ENCODE measurements at regions of chr2 and their contacts with region 1.

Region 1: DNA sequence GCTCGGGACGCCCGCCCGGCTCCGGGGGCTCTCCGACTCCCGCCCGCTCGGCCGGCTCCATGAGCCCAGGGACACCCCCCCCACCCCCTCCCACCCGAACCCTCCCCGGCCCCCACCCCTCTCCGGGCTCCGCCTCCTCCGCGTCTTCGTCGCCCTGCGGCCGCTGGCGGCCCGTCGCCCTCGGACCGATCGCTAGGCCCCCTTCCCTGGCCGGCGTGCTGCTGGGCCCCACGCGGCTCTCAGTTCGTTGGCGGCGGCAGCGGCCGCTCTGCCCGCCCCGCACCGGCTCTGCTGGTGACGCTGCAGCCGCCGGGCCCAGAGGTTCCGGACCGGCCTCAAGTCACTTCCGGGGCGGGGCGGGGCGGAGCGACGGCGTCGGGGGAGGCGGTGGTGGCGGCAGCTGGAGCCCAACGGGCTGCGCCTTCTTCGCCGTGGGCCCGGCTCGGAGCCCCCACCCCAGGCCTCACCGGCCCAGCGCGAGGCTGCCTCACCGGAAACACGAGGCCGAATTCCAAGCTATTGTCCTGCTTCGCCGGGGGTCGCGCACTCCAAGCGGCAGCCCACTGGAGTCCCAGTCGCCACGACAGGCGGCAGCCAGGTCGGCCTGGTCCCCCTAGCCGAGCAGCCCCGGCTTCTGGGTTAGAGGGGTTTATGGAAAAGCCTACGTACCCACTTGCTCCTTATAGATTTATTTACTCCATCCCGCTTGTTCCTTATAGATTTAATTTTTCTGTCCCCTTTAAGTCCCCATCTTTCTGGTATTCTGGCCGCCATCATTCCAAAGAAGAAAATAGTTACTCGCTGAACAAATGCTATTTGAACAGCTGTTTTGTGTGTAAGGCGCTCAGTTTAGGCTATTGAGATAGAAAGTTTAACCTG is at the start of gene PSME4:
- DNase-seq: peak; percentile 93
- ATAC-seq: peak; percentile 89
- H3K4me3 ChIP-seq: peak within 1 kb of the TSS; percentile 71 to 98 (median 95)
- H3K4me3 Mint-ChIP-seq: peak within 1 kb of the TSS; percentile 94
- H3K27ac ChIP-seq: peak within 1 kb of the TSS; percentile 71 to 89
- H3K27ac Mint-ChIP-seq: peak within 1 kb of the TSS; percentile 91
- H3K4me1 ChIP-seq: peaks cover 31 to 33% of the 10 kb centered on the region in 2 donors
- H3K4me1 Mint-ChIP-seq: peaks cover 47% of the 10 kb centered on the region
- H3K27me3 ChIP-seq: no peaks in the 10 kb centered on the region
- H3K27me3 Mint-ChIP-seq: no peaks in the 10 kb centered on the region
- CTCF ChIP-seq: no peak
- total RNA-seq, gene PSME4: 59.9 and 61.9 TPM in 2 replicates

Region 2: GRCh38 chr2:52594026-52594425 is 1376.9 kb before region 1 on chr2:
- CTCF ChIA-PET with region 1: no interaction called
- POLR2A ChIA-PET with region 1: no interaction called
- intact Hi-C with region 1: no loop called
- DNase-seq: no peak
- ATAC-seq: no peak
- H3K4me3 ChIP-seq: no peak overlapping the region
- H3K4me3 Mint-ChIP-seq: no peak overlapping the region
- H3K27ac ChIP-seq: no peak overlapping the region
- H3K27ac Mint-ChIP-seq: no peak overlapping the region
- H3K4me1 ChIP-seq: no peaks in the 10 kb centered on the region
- H3K4me1 Mint-ChIP-seq: no peaks in the 10 kb centered on the region
- H3K27me3 ChIP-seq: no peaks in the 10 kb centered on the region
- H3K27me3 Mint-ChIP-seq: no peaks in the 10 kb centered on the region
- CTCF ChIP-seq: no peak

Region 3: DNA sequence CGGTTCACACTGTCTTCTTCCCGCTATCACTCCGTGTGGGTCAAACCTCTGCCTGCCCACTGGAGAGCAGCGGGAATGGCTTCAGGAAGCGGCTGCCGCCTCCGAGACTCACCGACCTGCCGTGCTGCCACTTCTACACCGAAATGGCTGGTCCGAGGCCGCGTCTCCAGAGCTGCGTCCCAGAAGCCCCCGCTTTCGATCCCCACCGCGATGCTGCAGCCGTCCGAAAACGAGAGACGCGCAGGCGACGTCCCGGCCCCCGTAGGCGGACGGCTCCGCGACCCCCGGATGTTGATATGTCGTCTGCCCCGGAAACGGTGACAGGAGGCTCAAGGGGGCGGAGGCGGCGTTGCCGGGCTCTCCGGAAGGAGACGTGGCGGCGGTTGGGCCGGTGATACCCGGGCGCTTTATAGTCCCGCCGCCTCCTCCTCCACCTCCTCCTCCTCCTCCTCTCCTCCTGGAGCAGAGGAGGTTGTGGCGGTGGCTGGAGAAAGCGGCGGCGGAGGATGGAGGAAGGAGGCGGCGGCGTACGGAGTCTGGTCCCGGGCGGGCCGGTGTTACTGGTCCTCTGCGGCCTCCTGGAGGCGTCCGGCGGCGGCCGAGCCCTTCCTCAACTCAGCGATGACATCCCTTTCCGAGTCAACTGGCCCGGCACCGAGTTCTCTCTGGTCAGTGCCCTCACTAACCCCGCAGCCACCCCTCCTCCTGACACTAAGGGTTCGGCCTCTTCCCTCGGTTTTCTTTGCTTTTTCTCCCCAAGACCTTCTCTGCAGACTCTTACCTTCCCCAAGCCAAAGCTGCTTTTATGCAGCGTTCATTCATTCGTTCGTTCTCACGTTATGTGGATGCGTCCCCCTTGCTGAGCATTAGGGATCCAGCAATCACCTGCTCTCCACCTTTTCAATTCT is 184.0 kb before region 1 on chr2 and contains the starts of genes ASB3 and ERLEC1:
- CTCF ChIA-PET with region 1: no interaction called
- POLR2A ChIA-PET with region 1: interaction called, 3 read pairs
- intact Hi-C with region 1: loop called (anchors 5 kb)
- DNase-seq: peak; percentile 92
- ATAC-seq: peak; percentile 92
- H3K4me3 ChIP-seq: peak within 1 kb of the TSS; percentile 77 to 98 (median 93)
- H3K4me3 Mint-ChIP-seq: peak within 1 kb of the TSS; percentile 98
- H3K27ac ChIP-seq: peak within 1 kb of the TSS; percentile 80 to 88
- H3K27ac Mint-ChIP-seq: peak within 1 kb of the TSS; percentile 92
- H3K4me1 ChIP-seq: peaks cover 29 to 33% of the 10 kb centered on the region in 2 donors
- H3K4me1 Mint-ChIP-seq: peaks cover 57% of the 10 kb centered on the region
- H3K27me3 ChIP-seq: no peaks in the 10 kb centered on the region
- H3K27me3 Mint-ChIP-seq: no peaks in the 10 kb centered on the region
- CTCF ChIP-seq: no peak
- total RNA-seq, gene ASB3: 30.7 and 38.4 TPM in 2 replicates
- total RNA-seq, gene ERLEC1: 22.9 and 24.5 TPM in 2 replicates

Region 4: DNA sequence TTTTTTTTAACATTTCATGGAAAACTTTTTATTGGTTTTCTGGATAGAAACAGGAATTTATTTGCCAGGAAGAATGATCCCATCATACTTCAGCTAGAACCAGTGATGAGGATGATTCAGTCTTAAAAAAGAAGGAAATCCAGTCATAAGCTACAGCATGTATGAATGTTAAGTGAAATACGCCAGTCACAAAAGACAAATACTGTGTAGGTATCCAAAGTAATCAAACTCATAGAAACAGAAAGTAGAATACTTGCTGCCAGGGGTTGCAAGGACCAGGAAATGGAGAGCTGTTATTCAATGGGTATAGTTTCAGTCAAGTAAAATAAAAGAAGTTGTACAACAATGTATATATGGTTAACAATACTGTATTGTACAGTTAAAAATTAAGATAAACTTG is 21.5 kb before region 1 on chr2:
- CTCF ChIA-PET with region 1: interaction called, 3 read pairs
- POLR2A ChIA-PET with region 1: no interaction called
- intact Hi-C with region 1: loop called (anchors 2 kb)
- DNase-seq: no peak
- ATAC-seq: no peak
- H3K4me3 ChIP-seq: no peak overlapping the region
- H3K4me3 Mint-ChIP-seq: peak overlapping the region; percentile 15
- H3K27ac ChIP-seq: peak overlapping the region in 1 of 2 donors; percentile 48
- H3K27ac Mint-ChIP-seq: peak overlapping the region; percentile 4
- H3K4me1 ChIP-seq: peaks cover 39 to 45% of the 10 kb centered on the region in 2 donors
- H3K4me1 Mint-ChIP-seq: peaks cover 61% of the 10 kb centered on the region
- H3K27me3 ChIP-seq: no peaks in the 10 kb centered on the region
- H3K27me3 Mint-ChIP-seq: no peaks in the 10 kb centered on the region
- CTCF ChIP-seq: no peak

Region 5: DNA sequence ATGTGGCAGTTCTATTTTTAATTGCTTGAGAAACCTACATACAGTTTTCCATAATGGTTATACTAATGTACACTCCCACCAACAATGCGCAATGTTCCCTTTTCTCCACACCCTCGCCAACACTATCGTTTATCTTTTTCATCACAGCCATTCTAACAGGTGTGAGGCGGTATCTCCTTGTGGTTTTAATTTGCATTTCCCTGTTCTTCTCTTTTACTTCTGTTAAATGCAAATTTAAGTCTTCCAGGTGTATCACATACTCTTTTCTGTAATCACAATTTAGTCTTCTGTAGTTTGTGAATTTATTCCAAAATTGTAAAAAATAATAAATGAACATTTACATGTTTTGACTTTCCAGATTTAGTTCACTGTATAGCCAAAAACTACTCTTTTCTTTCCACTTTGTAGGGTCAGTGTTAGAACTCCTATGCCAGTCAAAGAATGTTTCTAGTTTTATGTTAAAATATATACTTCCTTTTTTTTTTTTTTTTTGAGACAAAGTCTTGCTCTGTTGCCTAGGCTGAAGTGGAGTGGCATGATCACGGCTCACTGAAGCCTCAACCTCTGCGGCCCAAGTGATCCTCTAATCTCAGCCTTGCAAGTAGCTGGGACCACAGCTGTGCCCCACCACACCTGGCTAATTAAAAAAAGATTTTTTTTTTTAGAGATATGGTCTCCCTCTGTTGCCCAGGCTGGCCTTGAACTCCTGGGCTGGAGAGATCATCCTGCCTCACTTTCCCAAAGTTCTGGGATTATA is 129.0 kb after region 1 on chr2:
- CTCF ChIA-PET with region 1: no interaction called
- POLR2A ChIA-PET with region 1: interaction called, 5 read pairs
- intact Hi-C with region 1: loop called (anchors 1 kb)
- DNase-seq: peak; percentile 88
- ATAC-seq: peak; percentile 80
- H3K4me3 ChIP-seq: peak overlapping the region in 2 of 5 experiments; percentile 25 to 50
- H3K4me3 Mint-ChIP-seq: peak overlapping the region; percentile 56
- H3K27ac ChIP-seq: peak overlapping the region; percentile 77 to 85
- H3K27ac Mint-ChIP-seq: peak overlapping the region; percentile 85
- H3K4me1 ChIP-seq: peaks cover 78 to 79% of the 10 kb centered on the region in 2 donors
- H3K4me1 Mint-ChIP-seq: peaks cover 80% of the 10 kb centered on the region
- H3K27me3 ChIP-seq: no peaks in the 10 kb centered on the region
- H3K27me3 Mint-ChIP-seq: no peaks in the 10 kb centered on the region
- CTCF ChIP-seq: no peak

Measured in B cell (primary cell).